ENCODE measurements at regions of chr6 and their contacts with region 1.

Region 1: GRCh38 chr6:118277631-118278030 is 270.5 kb upstream of the PLN start:
- DNase-seq: no peak
- H3K4me3 ChIP-seq: no peak overlapping the region
- H3K27ac ChIP-seq: no peak overlapping the region
- H3K4me1 ChIP-seq: no peaks in the 10 kb centered on the region
- H3K27me3 ChIP-seq: no peaks in the 10 kb centered on the region
- CTCF ChIP-seq: no peak

Region 2: DNA sequence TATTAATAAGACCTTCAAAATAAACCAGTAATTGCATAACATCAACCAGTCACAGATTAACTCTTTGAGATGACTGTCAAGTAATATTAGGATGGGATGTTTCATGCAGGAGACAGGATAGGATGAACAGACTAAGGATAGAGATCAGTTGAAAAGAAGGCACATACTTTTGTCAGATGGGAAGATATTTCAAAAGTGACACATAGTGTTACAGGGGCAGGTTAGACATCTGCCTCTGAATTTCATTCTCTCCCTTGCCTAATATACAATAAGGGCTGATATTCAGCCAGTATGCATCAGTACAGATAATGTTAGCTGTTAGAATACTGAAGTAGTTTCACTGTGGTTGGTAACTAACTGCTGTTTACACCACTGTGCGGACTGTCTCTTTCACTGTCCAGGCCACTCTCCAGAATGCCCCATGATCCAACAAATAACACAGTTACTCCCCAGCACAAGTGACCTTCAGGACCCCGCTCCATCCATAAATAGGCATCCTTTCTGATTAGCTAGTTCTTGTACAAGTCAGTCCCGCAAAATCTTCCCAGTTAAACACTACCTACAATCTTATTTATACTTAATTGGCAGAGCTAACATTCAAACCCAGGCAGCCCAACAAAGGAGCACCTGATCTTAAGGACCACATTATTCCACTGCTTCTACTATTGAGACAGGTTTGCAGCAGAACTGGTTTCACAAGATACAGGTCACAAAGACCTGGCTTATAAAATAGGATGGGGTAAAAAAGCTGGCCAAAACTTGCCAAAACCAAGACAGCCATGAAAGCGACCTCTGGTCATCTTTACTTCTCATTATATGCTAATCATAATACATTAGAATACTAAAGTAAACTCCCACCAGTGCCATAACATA is 248.5 kb after region 1 on chr6:
- intact Hi-C with region 1: no loop called
- DNase-seq: no peak
- H3K4me3 ChIP-seq: no peak overlapping the region
- H3K27ac ChIP-seq: no peak overlapping the region
- H3K4me1 ChIP-seq: peaks cover 0 to 52% (median 6%) of the 10 kb centered on the region in 4 donors
- H3K27me3 ChIP-seq: no peaks in the 10 kb centered on the region
- CTCF ChIP-seq: no peak

Region 3: DNA sequence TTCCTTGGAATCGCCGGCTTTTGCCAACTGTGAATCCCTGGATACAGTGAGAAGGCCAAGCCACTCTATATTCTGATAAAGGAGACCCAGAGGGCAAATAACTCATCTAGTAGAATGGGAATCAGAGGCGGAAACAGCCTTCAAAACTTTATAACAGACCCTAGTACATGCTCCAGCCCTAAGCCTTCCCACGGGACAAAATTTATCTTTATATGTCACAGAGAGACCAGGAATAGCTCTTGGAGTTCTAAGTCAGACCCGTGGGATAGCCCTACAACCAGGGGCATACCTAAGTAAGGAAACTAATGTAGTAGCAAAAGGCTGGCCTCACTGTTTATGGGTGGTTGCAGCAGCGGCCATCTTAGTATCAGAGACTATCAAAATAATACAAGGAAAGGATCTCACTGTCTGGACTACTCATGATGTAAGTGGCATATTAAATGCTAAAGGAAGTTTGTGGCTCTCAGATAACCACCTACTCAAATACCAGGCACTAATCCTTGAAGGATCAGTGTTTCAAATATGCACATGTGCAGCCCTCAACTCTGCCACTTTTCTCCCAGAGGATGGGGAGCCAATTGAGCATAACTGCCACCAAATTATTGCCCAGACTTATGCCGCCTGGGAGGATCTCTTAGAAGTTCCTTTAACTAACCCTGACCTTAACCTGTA is 344.3 kb after region 1 on chr6:
- intact Hi-C with region 1: loop called (anchors 10 kb)
- DNase-seq: no peak
- H3K4me3 ChIP-seq: no peak overlapping the region
- H3K27ac ChIP-seq: no peak overlapping the region
- H3K4me1 ChIP-seq: peaks cover 0 to 7% (median 2%) of the 10 kb centered on the region in 4 donors
- H3K27me3 ChIP-seq: no peaks in the 10 kb centered on the region
- CTCF ChIP-seq: no peak

Region 4: DNA sequence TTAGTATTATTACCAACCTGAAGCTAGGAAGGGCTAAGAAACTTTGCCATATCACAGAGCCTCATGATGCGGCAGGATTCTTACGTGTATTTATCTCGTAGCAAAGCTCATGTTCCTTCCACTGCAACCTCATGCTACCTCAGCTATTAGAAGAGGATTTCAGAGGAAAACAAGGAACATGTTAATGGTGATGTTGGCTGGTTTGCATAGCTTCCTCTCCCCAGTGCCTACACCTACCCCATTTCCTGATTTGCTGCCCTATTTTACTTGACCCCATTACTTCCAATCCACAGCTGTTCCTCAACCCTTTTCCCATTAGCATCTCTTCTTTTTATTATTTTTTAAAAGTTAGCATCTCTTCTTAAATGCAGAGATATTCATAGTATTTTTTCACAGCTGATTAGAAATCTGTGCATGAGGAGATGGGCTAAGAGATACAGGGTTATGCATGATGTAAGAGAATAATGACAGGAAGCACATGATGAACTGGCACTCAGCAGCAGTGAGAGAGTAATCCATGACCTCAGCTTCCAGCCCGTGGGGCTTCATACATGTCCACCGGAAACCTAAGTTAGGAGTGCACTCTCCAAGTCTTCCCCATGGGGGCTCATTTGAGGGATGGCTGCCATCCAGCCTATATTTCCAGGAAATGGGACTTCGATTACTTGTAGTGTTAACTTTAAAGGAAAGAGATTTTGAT is 510.2 kb after region 1 on chr6:
- intact Hi-C with region 1: loop called (anchors 10 kb)
- DNase-seq: no peak
- H3K4me3 ChIP-seq: no peak overlapping the region
- H3K27ac ChIP-seq: no peak overlapping the region
- H3K4me1 ChIP-seq: peaks cover 0 to 6% (median 2%) of the 10 kb centered on the region in 4 donors
- H3K27me3 ChIP-seq: no peaks in the 10 kb centered on the region
- CTCF ChIP-seq: no peak